CD4-positive, alpha-beta T cell (primary cell): ENCODE measurements at regions of chr9 and their contacts with region 1.

Region 1: GRCh38 chr9:94726495-94727191 is at the start of gene AOPEP:
- DNase-seq: peak; percentile 98 to 100 (median 99)
- ATAC-seq: peak; percentile 97
- H3K4me3 ChIP-seq: peak within 1 kb of the TSS; percentile 86
- H3K4me3 Mint-ChIP-seq: peak within 1 kb of the TSS; percentile 98
- H3K27ac ChIP-seq: peak within 1 kb of the TSS; percentile 88
- H3K27ac Mint-ChIP-seq: peak within 1 kb of the TSS; percentile 98
- H3K4me1 ChIP-seq: peaks cover 12% of the 10 kb centered on the region
- H3K4me1 Mint-ChIP-seq: peaks cover 22% of the 10 kb centered on the region
- H3K27me3 ChIP-seq: no peaks in the 10 kb centered on the region
- H3K27me3 Mint-ChIP-seq: no peaks in the 10 kb centered on the region
- CTCF ChIP-seq: no peak
- total RNA-seq, gene AOPEP: 6.9 to 7.0 TPM

Region 2: GRCh38 chr9:94166237-94166963 is 560.2 kb before region 1 on chr9:
- CTCF ChIA-PET with region 1: no interaction called
- POLR2A ChIA-PET with region 1: no interaction called
- intact Hi-C with region 1: loop called in 1 of 2 experiments (anchors 5 kb)
- DNase-seq: peak; percentile 86 to 98 (median 92)
- ATAC-seq: peak; percentile 60
- H3K4me3 ChIP-seq: peak overlapping the region; percentile 94
- H3K4me3 Mint-ChIP-seq: peak overlapping the region; percentile 100
- H3K27ac ChIP-seq: peak overlapping the region; percentile 86 to 95
- H3K27ac Mint-ChIP-seq: peak overlapping the region; percentile 98
- H3K4me1 ChIP-seq: peaks cover 21% of the 10 kb centered on the region
- H3K4me1 Mint-ChIP-seq: peaks cover 64% of the 10 kb centered on the region
- H3K27me3 ChIP-seq: no peaks in the 10 kb centered on the region
- H3K27me3 Mint-ChIP-seq: no peaks in the 10 kb centered on the region
- CTCF ChIP-seq: no peak

Region 3: GRCh38 chr9:94672811-94673487 is 53.7 kb before region 1 on chr9:
- CTCF ChIA-PET with region 1: no interaction called
- POLR2A ChIA-PET with region 1: interaction called, 27 read pairs
- intact Hi-C with region 1: loop called (anchors 2 to 5 kb)
- DNase-seq: no peak
- ATAC-seq: no peak
- H3K4me3 ChIP-seq: no peak overlapping the region
- H3K4me3 Mint-ChIP-seq: no peak overlapping the region
- H3K27ac ChIP-seq: no peak overlapping the region
- H3K27ac Mint-ChIP-seq: no peak overlapping the region
- H3K4me1 ChIP-seq: no peaks in the 10 kb centered on the region
- H3K4me1 Mint-ChIP-seq: no peaks in the 10 kb centered on the region
- H3K27me3 ChIP-seq: no peaks in the 10 kb centered on the region
- H3K27me3 Mint-ChIP-seq: peaks cover 7% of the 10 kb centered on the region
- CTCF ChIP-seq: no peak

Region 4: DNA sequence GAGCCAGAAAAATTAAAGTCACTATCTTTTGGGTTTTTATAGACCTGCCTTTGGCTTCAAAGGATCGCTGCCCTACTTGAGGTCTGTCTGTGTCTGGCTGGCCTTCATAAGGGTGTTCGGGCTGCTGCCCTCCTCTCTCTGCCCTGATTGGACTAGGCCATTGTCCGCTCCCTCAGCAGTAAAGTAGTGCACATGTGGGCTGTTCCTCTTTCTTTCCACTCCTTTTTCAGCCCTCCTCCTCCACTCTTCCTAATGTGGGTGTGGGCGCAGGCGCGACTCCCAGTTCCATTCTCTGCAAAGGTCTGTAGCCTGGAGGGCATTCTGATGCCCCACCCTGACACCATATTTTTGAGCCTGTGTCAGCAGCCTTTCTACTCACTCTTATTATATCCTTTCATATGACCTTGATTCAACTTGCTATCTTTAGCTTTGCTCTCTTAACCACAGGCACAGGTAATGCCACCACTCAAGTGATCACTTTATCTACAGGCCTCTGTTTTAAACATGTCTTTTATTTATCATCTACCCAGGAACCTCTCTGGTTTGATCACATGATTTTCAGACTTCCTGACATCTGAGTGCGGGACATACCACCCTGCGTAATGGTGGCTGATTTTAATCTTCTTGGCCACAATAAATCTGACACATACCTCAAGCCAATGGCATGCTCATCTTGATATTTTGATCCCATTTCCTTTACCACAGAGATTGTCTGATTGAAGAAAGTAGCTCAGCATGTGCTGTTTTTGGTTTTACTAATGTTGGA is 144.3 kb after region 1 on chr9:
- CTCF ChIA-PET with region 1: no interaction called
- POLR2A ChIA-PET with region 1: interaction called, 3 read pairs
- intact Hi-C with region 1: loop called in 1 of 2 experiments (anchors 1 kb)
- DNase-seq: peak in 12 of 14 experiments; percentile 9 to 91 (median 36)
- ATAC-seq: peak; percentile 89
- H3K4me3 ChIP-seq: no peak overlapping the region
- H3K4me3 Mint-ChIP-seq: peak overlapping the region; percentile 76
- H3K27ac ChIP-seq: peak overlapping the region; percentile 42 to 45
- H3K27ac Mint-ChIP-seq: peak overlapping the region; percentile 80
- H3K4me1 ChIP-seq: peaks cover 25% of the 10 kb centered on the region
- H3K4me1 Mint-ChIP-seq: peaks cover 30% of the 10 kb centered on the region
- H3K27me3 ChIP-seq: no peaks in the 10 kb centered on the region
- H3K27me3 Mint-ChIP-seq: no peaks in the 10 kb centered on the region
- CTCF ChIP-seq: no peak

Region 5: GRCh38 chr9:95510709-95511615 is 784.3 kb after region 1 on chr9:
- CTCF ChIA-PET with region 1: no interaction called
- POLR2A ChIA-PET with region 1: no interaction called
- intact Hi-C with region 1: loop called in 1 of 2 experiments (anchors 10 kb)
- DNase-seq: peak; percentile 59 to 92 (median 82)
- ATAC-seq: peak; percentile 54
- H3K4me3 ChIP-seq: peak overlapping the region; percentile 73
- H3K4me3 Mint-ChIP-seq: peak overlapping the region; percentile 93
- H3K27ac ChIP-seq: no peak overlapping the region
- H3K27ac Mint-ChIP-seq: peak overlapping the region; percentile 83
- H3K4me1 ChIP-seq: peaks cover 56% of the 10 kb centered on the region
- H3K4me1 Mint-ChIP-seq: peaks cover 53% of the 10 kb centered on the region
- H3K27me3 ChIP-seq: peaks cover 11 to 15% of the 10 kb centered on the region in 2 experiments
- H3K27me3 Mint-ChIP-seq: peaks cover 15% of the 10 kb centered on the region
- CTCF ChIP-seq: no peak